ENCODE measurements at regions of chrX and their contacts with region 1.

Region 1: DNA sequence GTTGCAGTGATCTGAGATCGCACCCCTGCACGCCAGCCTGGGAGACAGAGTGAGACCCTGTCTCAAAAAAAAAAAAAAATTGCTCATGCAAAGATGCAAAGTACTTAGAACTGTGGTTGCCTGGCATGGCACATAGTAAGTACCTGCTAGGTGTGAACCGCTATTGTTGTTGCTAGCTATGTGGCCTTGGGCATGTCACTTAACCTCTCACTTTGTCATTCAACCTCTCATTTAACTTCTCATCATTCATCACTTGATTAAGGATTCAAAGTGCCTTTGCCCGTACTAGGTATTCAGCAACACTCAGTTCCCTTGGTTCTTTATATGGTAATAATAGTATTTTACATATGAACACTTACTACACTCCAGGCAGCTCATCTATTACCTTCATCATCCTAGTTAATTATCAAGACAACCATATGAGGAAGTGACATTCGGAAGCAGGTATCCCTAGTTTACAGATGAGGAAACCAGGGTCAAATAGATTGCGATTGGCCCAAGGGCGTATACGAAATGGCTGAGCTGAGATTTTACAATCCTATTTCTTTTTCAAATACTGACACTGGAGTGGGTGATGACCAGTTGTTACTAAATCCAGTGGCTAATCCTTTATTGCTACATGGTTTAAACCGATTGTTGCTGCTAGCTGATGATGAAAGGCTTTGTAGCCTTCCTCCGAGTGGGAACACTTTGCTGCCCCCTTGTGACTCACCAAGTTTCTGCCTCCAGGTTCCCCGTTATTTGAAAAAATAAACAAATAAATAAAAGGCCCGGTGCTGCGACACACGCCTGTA is 28.8 kb upstream of the SOWAHD start:
- DNase-seq: peak; percentile 59
- H3K4me3 ChIP-seq: no peak overlapping the region
- H3K27ac ChIP-seq: no peak overlapping the region
- H3K4me1 ChIP-seq: no peaks in the 10 kb centered on the region
- H3K27me3 ChIP-seq: no peaks in the 10 kb centered on the region
- CTCF ChIP-seq: peak; percentile 35 to 50
- POLR2A ChIP-seq: no peak

Region 2: GRCh38 chrX:119468930-119469635 is 260.5 kb before region 1 on chrX:
- CTCF ChIA-PET with region 1: no interaction called
- POLR2A ChIA-PET with region 1: no interaction called
- dilution Hi-C with region 1: no loop called
- intact Hi-C with region 1: no loop called
- DNase-seq: peak; percentile 81
- H3K4me3 ChIP-seq: peak overlapping the region; percentile 51 to 89 (median 58)
- H3K27ac ChIP-seq: peak overlapping the region; percentile 87
- H3K4me1 ChIP-seq: peaks cover 5% of the 10 kb centered on the region
- H3K27me3 ChIP-seq: no peaks in the 10 kb centered on the region
- CTCF ChIP-seq: peak; percentile 53 to 71
- POLR2A ChIP-seq: no peak

Region 3: GRCh38 chrX:119617517-119618164 is 112.0 kb before region 1 on chrX:
- CTCF ChIA-PET with region 1: interaction called, 12 read pairs
- POLR2A ChIA-PET with region 1: interaction called, 3 read pairs
- dilution Hi-C with region 1: no loop called
- intact Hi-C with region 1: loop called (anchors 1 kb)
- DNase-seq: no peak
- H3K4me3 ChIP-seq: no peak overlapping the region
- H3K27ac ChIP-seq: no peak overlapping the region
- H3K4me1 ChIP-seq: peaks cover 7% of the 10 kb centered on the region
- H3K27me3 ChIP-seq: no peaks in the 10 kb centered on the region
- CTCF ChIP-seq: no peak
- POLR2A ChIP-seq: no peak

Region 4: DNA sequence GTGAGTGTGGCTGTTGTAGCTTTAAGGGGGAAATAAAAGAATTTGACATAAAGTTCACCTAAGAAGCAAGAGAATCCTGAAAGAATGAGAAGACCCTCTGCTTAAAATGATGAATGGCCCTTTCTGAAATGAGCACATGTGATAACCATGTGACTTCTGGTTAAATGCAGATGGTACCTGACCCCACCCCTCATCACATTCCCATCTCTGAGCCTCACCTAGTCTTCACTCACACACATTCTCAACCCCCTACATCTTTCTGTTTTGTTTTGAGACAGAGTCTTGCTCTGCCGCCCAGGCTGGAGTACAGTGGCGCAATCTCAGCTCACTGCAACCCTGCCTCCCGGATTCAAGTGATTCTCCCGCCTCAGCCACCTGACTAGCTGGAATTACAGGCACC is 68.1 kb before region 1 on chrX:
- CTCF ChIA-PET with region 1: no interaction called
- POLR2A ChIA-PET with region 1: no interaction called
- dilution Hi-C with region 1: no loop called
- intact Hi-C with region 1: no loop called
- DNase-seq: no peak
- H3K4me3 ChIP-seq: no peak overlapping the region
- H3K27ac ChIP-seq: no peak overlapping the region
- H3K4me1 ChIP-seq: no peaks in the 10 kb centered on the region
- H3K27me3 ChIP-seq: no peaks in the 10 kb centered on the region
- CTCF ChIP-seq: no peak
- POLR2A ChIP-seq: no peak